Heart left ventricle (tissue), 16 donors: ENCODE measurements at regions of chrX and their contacts with region 1.

Region 1: GRCh38 chrX:3638280-3638873 is 75.1 kb downstream of the PRKX start:
- DNase-seq: peak in 3 of 5 donors; percentile 14 to 34 (median 17)
- ATAC-seq: no peak
- H3K4me3 ChIP-seq: no peak overlapping the region
- H3K27ac ChIP-seq: no peak overlapping the region
- H3K4me1 ChIP-seq: no peaks in the 10 kb centered on the region
- H3K27me3 ChIP-seq: no peaks in the 10 kb centered on the region
- CTCF ChIP-seq: peak; percentile 32 to 65 (median 54)
- POLR2A ChIP-seq: no peak

Region 2: GRCh38 chrX:3026065-3026815 is 612.1 kb before region 1 on chrX:
- intact Hi-C with region 1: loop called in 2 of 10 experiments (anchors 5 to 10 kb)
- DNase-seq: no peak
- ATAC-seq: no peak
- H3K4me3 ChIP-seq: no peak overlapping the region
- H3K27ac ChIP-seq: no peak overlapping the region
- H3K4me1 ChIP-seq: no peaks in the 10 kb centered on the region
- H3K27me3 ChIP-seq: peaks cover 0 to 4% (median 0%) of the 10 kb centered on the region in 9 donors
- CTCF ChIP-seq: no peak
- POLR2A ChIP-seq: no peak

Region 3: GRCh38 chrX:3037218-3037617 is 601.2 kb before region 1 on chrX:
- intact Hi-C with region 1: loop called in 3 of 10 experiments (anchors 2 to 10 kb)
- DNase-seq: no peak
- ATAC-seq: no peak
- H3K4me3 ChIP-seq: no peak overlapping the region
- H3K27ac ChIP-seq: no peak overlapping the region
- H3K4me1 ChIP-seq: no peaks in the 10 kb centered on the region
- H3K27me3 ChIP-seq: no peaks in the 10 kb centered on the region
- CTCF ChIP-seq: no peak
- POLR2A ChIP-seq: no peak

Region 4: DNA sequence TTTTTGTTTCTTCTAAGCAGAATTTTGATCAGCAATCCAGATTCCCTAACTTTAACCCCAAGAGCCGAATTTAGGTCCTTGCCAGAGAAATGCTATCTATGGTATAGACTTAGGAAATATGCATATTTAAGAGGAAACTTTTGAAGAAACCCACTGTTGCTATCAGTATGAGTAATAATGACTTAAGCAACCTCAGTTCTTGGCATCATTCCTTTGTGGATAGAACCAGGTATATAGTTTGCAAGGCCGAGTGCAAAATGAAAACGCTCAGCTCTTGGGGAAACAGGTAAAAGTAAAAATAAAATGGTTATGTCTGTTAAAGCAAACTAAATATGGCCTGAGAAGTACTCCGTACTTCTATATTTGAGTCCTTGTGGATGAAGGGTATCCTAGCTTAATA is 519.0 kb before region 1 on chrX:
- intact Hi-C with region 1: loop called in 6 of 10 experiments (anchors 5 to 10 kb)
- DNase-seq: no peak
- ATAC-seq: no peak
- H3K4me3 ChIP-seq: no peak overlapping the region
- H3K27ac ChIP-seq: no peak overlapping the region
- H3K4me1 ChIP-seq: no peaks in the 10 kb centered on the region
- H3K27me3 ChIP-seq: no peaks in the 10 kb centered on the region
- CTCF ChIP-seq: no peak
- POLR2A ChIP-seq: no peak

Region 5: DNA sequence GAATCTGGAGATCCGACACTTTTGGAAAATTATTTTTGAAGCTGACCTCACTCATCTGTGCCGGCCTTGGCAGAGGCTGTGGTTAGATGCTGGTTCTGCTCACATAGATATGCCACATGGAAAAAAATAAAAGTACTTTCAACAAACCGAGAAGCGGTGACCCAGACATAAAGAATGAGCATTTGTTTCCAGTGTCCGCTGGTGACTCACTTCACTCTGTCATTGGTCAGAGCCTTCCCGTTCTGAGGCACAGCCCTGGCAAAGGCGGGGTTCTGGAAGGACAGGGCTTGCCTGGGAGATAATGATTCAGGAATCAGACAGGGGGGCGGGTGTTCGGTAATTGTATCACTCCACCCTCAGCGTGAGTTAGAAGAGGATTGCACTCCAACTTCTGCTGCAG is 119.5 kb before region 1 on chrX:
- intact Hi-C with region 1: no loop called
- DNase-seq: peak in 4 of 5 donors; percentile 24 to 66 (median 50)
- ATAC-seq: peak in 3 of 4 donors; percentile 72 to 83 (median 80)
- H3K4me3 ChIP-seq: no peak overlapping the region
- H3K27ac ChIP-seq: peak overlapping the region in 3 of 12 donors; percentile 25 to 64 (median 39)
- H3K4me1 ChIP-seq: no peaks in the 10 kb centered on the region
- H3K27me3 ChIP-seq: no peaks in the 10 kb centered on the region
- CTCF ChIP-seq: no peak
- POLR2A ChIP-seq: no peak